Activated CD4-positive, alpha-beta T cell treated with anti-CD3 and anti-CD28 coated beads for 36 hours (primary cell): ENCODE measurements at regions of chr3 and their contacts with region 1.

Region 1: GRCh38 chr3:177197041-177197727 is at the start of gene TBL1XR1:
- DNase-seq: peak; percentile 91
- ATAC-seq: peak; percentile 34
- H3K4me3 Mint-ChIP-seq: peak within 1 kb of the TSS; percentile 88
- H3K27ac Mint-ChIP-seq: peak within 1 kb of the TSS; percentile 99
- H3K4me1 Mint-ChIP-seq: peaks cover 65% of the 10 kb centered on the region
- H3K27me3 Mint-ChIP-seq: no peaks in the 10 kb centered on the region
- total RNA-seq, gene TBL1XR1: 164 to 226 TPM

Region 2: GRCh38 chr3:177124882-177125281 is 72.3 kb before region 1 on chr3:
- CTCF ChIA-PET with region 1: interaction called, 4 read pairs
- POLR2A ChIA-PET with region 1: no interaction called
- intact Hi-C with region 1: loop called in 1 of 2 experiments (anchors 5 kb)
- DNase-seq: no peak
- ATAC-seq: peak; percentile 68
- H3K4me3 Mint-ChIP-seq: no peak overlapping the region
- H3K27ac Mint-ChIP-seq: peak overlapping the region; percentile 40
- H3K4me1 Mint-ChIP-seq: peaks cover 81% of the 10 kb centered on the region
- H3K27me3 Mint-ChIP-seq: no peaks in the 10 kb centered on the region

Region 3: GRCh38 chr3:177150970-177151627 is 46.1 kb before region 1 on chr3:
- CTCF ChIA-PET with region 1: interaction called, 4 read pairs
- POLR2A ChIA-PET with region 1: interaction called, 8 read pairs
- intact Hi-C with region 1: loop called (anchors 2 kb)
- DNase-seq: peak; percentile 47
- ATAC-seq: peak; percentile 92
- H3K4me3 Mint-ChIP-seq: peak overlapping the region; percentile 27
- H3K27ac Mint-ChIP-seq: peak overlapping the region; percentile 71
- H3K4me1 Mint-ChIP-seq: peaks cover 64% of the 10 kb centered on the region
- H3K27me3 Mint-ChIP-seq: no peaks in the 10 kb centered on the region

Region 4: GRCh38 chr3:177314897-177315296 is 117.7 kb after region 1 on chr3:
- CTCF ChIA-PET with region 1: no interaction called
- POLR2A ChIA-PET with region 1: no interaction called
- intact Hi-C with region 1: loop called (anchors 1 to 5 kb)
- DNase-seq: no peak
- ATAC-seq: peak; percentile 72
- H3K4me3 Mint-ChIP-seq: no peak overlapping the region
- H3K27ac Mint-ChIP-seq: no peak overlapping the region
- H3K4me1 Mint-ChIP-seq: peaks cover 23% of the 10 kb centered on the region
- H3K27me3 Mint-ChIP-seq: peaks cover 3% of the 10 kb centered on the region

Region 5: DNA sequence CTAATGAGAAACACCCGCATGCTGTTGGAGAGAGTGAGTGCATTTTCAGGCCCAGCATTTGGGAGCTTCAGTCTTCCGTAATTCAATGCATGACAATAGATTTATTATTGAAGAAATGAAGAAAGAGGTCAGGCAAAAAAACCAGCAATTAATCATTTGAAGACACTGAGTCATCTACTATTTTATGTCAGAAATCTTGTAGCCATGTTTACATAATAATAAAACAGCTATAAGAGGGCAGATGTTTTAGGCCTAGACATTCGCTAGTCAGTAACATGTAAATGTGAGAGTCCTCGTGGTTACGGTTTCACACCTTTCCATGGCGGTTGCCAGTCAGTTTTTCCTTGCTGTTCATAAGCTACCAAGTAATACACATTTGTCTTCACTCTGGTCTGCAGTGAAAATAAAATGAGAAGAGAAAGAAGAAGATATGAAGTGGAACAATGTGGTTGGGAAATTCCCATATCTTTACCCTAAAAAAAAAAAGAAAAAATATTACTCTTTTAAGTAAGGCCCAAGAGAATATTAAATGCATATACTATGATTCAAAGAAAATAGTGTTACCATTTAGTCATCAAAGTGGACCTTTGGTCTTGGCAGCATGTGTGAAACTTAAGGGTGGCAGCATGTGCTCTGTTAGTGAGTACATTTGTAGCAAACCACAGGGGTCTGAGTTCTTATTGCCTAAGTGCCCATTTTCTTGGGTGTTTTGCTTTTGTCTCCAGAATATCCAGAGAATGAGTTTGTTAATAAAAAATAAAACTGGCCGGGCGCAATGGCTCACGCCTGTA is 140.6 kb after region 1 on chr3:
- CTCF ChIA-PET with region 1: interaction called, 3 read pairs
- POLR2A ChIA-PET with region 1: interaction called, 4 read pairs
- intact Hi-C with region 1: loop called (anchors 1 kb)
- DNase-seq: peak; percentile 89
- ATAC-seq: peak; percentile 89
- H3K4me3 Mint-ChIP-seq: peak overlapping the region; percentile 23
- H3K27ac Mint-ChIP-seq: peak overlapping the region; percentile 78
- H3K4me1 Mint-ChIP-seq: peaks cover 41% of the 10 kb centered on the region
- H3K27me3 Mint-ChIP-seq: peaks cover 6% of the 10 kb centered on the region

Region 6: GRCh38 chr3:177597311-177598096 is 400.3 kb after region 1 on chr3:
- CTCF ChIA-PET with region 1: no interaction called
- POLR2A ChIA-PET with region 1: no interaction called
- intact Hi-C with region 1: loop called in 1 of 2 experiments (anchors 5 kb)
- DNase-seq: peak; percentile 51
- ATAC-seq: peak; percentile 68
- H3K4me3 Mint-ChIP-seq: peak overlapping the region; percentile 45
- H3K27ac Mint-ChIP-seq: peak overlapping the region; percentile 88
- H3K4me1 Mint-ChIP-seq: peaks cover 70% of the 10 kb centered on the region
- H3K27me3 Mint-ChIP-seq: no peaks in the 10 kb centered on the region